ENCODE measurements at regions of chr11 and their contacts with region 1.

Region 1: DNA sequence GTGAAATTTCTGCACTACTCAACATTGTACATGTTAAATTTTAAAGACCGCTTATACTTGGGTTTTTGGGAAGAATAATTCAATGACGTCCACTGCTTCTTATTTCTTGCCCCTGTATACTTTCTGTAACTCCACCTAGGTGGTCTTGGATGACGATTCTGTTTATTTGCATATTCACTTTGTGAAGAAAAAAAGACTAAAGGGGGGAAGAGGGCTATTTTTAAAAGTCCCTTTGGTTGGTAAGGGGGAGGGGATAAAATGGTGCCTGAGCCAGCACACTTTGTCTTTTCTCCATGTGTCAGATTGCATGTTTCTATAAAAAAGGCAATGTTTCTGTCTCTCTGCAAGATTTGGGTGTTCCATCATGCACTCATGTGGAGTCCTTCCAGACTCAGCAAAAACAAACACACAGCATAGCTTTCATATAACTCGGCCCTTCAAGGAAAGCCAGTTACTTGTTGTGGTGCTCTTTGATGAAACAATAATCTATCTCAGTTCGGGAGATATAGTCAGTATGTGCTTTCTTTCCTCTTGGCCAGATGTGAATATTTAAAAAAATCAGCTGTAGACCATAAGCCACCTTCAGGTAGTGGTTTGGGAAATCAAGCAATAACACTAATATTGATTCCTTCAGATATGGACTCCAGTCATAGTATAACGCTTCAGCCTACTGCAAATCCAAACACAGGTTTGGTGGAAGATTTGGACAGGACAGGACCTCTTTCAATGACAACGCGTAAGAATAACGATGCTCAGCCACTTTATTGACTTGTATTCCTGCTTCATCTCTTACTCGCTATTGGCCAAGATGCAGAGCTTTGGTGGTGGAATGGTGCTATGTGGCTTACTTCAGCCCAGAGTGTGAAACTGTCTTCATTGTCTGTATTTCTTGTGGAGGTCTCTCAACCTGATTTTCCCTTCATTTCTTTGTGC is 68.8 kb downstream of the CD44 start:
- DNase-seq: no peak
- ATAC-seq: no peak
- H3K4me3 ChIP-seq: no peak overlapping the region
- H3K4me3 Mint-ChIP-seq: peak overlapping the region in 1 of 10 donors; percentile 1
- H3K27ac ChIP-seq: no peak overlapping the region
- H3K27ac Mint-ChIP-seq: peak overlapping the region; percentile 20 to 84 (median 40)
- H3K4me1 ChIP-seq: peaks cover 0 to 2% of the 10 kb centered on the region in 2 donors
- H3K4me1 Mint-ChIP-seq: peaks cover 9 to 78% (median 74%) of the 10 kb centered on the region in 7 donors
- H3K27me3 ChIP-seq: no peaks in the 10 kb centered on the region
- H3K27me3 Mint-ChIP-seq: no peaks in the 10 kb centered on the region

Region 2: GRCh38 chr11:34997952-34998528 is 209.7 kb before region 1 on chr11:
- CTCF ChIA-PET with region 1: no interaction called
- POLR2A ChIA-PET with region 1: no interaction called
- intact Hi-C with region 1: no loop called
- DNase-seq: peak in 6 of 9 donors; percentile 27 to 54 (median 44)
- ATAC-seq: peak; percentile 72
- H3K4me3 ChIP-seq: no peak overlapping the region
- H3K4me3 Mint-ChIP-seq: peak overlapping the region in 9 of 10 donors; percentile 6 to 81 (median 34)
- H3K27ac ChIP-seq: peak overlapping the region; percentile 8
- H3K27ac Mint-ChIP-seq: peak overlapping the region; percentile 15 to 90 (median 69)
- H3K4me1 ChIP-seq: peaks cover 15 to 19% of the 10 kb centered on the region in 2 donors
- H3K4me1 Mint-ChIP-seq: peaks cover 19 to 38% (median 35%) of the 10 kb centered on the region in 7 donors
- H3K27me3 ChIP-seq: no peaks in the 10 kb centered on the region
- H3K27me3 Mint-ChIP-seq: no peaks in the 10 kb centered on the region

Region 3: DNA sequence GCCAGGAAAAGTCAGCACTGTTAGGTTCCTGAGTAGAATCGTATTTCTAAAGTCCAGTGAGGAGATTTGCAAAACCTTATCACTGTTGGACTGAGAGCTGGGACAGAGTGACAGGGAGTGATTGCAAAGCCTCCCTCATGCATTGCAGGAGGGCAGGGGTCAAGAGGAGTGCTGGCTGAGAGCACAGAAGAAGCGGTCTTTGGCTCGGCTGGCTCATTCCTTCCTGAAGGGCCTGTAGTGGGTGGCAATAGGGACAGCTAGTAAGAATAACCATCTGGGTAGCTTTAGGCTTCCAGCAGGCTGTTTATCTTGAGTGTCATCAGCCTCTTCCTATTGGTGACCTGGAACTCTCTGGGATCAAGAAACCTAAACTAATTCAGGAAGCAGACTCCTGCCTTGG is 15.4 kb before region 1 on chr11:
- CTCF ChIA-PET with region 1: no interaction called
- POLR2A ChIA-PET with region 1: interaction called, 4 read pairs
- intact Hi-C with region 1: loop called in 1 of 2 experiments (anchors 2 kb)
- DNase-seq: no peak
- ATAC-seq: no peak
- H3K4me3 ChIP-seq: no peak overlapping the region
- H3K4me3 Mint-ChIP-seq: peak overlapping the region in 5 of 10 donors; percentile 8 to 61 (median 24)
- H3K27ac ChIP-seq: peak overlapping the region; percentile 0
- H3K27ac Mint-ChIP-seq: peak overlapping the region in 8 of 9 donors; percentile 55 to 89 (median 75)
- H3K4me1 ChIP-seq: peaks cover 12 to 51% of the 10 kb centered on the region in 2 donors
- H3K4me1 Mint-ChIP-seq: peaks cover 37 to 100% (median 97%) of the 10 kb centered on the region in 7 donors
- H3K27me3 ChIP-seq: no peaks in the 10 kb centered on the region
- H3K27me3 Mint-ChIP-seq: no peaks in the 10 kb centered on the region

Measured in naive thymus-derived CD4-positive, alpha-beta T cell (primary cell).